Ovary (tissue), 10 donors: ENCODE measurements at regions of chr7 and their contacts with region 1.

Region 1: GRCh38 chr7:131164025-131164899 is 163.4 kb upstream of the MKLN1 start:
- DNase-seq: no peak
- H3K4me3 ChIP-seq: no peak overlapping the region
- H3K27ac ChIP-seq: no peak overlapping the region
- H3K4me1 ChIP-seq: no peaks in the 10 kb centered on the region
- H3K27me3 ChIP-seq: no peaks in the 10 kb centered on the region
- CTCF ChIP-seq: no peak
- EP300 ChIP-seq: no peak
- POLR2A ChIP-seq: no peak

Region 2: DNA sequence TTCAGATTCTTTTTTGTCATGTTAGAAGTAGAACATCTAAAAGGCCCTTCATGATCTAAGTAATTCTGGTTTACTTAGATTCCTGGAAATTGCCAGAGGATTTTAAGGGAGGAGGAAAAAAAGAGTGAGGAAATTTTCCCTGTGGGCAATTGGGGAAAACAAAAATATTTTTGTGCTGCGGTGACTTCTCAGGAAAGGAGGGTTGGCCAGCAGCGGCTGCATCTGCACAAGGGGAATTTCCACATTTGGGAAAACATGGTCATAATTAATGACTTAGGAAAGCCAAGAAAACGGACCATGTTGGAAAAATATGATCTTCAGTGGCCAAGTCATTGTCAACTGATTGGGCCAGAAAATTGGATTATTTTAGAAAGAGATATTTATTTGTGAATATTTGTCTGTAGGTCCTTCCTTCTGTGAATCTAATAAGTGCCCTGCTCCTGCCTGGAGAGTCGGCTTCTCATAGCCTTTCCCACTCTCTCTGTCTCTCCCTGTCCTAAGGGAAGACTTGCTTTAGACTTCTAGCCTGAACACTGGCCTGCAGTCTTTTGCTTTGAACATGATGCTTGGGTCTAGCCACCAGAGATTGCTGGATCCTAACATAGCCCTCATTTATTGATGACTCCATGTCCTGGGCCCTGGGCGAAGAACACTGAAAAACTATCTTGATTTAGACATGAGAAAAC is 39.2 kb after region 1 on chr7:
- intact Hi-C with region 1: loop called in 1 of 4 experiments (anchors 1 kb)
- DNase-seq: no peak
- H3K4me3 ChIP-seq: no peak overlapping the region
- H3K27ac ChIP-seq: no peak overlapping the region
- H3K4me1 ChIP-seq: no peaks in the 10 kb centered on the region
- H3K27me3 ChIP-seq: no peaks in the 10 kb centered on the region
- CTCF ChIP-seq: no peak
- EP300 ChIP-seq: no peak
- POLR2A ChIP-seq: no peak